CD8-positive, alpha-beta T cell (primary cell): ENCODE measurements at regions of chr2 and their contacts with region 1.

Region 1: DNA sequence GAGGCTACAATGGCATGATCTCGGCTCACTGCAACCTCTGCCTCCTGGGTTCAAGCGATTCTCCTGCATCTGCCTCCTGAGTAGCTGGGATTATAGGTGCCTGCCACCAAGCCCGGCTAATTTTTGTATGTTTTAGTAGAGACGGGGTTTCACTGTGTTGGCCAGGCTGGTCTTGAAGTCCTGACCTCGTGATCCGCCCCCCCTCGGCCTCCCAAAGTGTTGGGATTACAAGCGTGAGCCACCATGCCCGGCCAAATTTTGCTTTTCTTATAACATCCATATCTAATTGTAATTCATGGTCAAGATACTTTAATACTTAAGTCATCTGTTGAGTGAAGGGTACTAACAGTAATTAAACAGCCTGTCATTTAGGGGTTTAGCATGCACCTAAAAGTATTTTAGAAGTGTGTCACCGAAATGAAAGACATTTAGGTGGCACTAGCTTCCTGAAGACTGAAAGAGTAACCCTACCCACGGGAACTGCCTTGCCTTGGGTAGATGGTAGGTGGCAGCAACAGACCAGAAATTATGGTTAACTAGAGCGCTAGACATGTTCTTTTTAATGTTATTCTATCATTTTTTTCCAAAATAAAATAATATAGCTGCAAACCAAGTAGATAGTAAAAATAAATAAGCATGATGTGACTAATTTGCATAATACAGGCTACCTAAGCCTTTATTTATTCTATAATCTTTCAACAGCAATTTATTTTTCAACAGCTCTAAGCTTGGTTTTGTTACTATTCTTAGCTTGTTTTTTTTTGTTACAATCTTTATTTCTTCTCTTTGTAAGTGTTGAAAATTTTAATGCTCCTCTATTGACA is 8.6 kb upstream of the ACYP2 start:
- DNase-seq: peak in 5 of 9 experiments; percentile 35 to 70 (median 53)
- ATAC-seq: peak; percentile 87
- H3K4me3 ChIP-seq: no peak overlapping the region
- H3K4me3 Mint-ChIP-seq: peak overlapping the region; percentile 11
- H3K27ac ChIP-seq: no peak overlapping the region
- H3K27ac Mint-ChIP-seq: no peak overlapping the region
- H3K4me1 ChIP-seq: no peaks in the 10 kb centered on the region
- H3K4me1 Mint-ChIP-seq: peaks cover 8% of the 10 kb centered on the region
- H3K27me3 ChIP-seq: no peaks in the 10 kb centered on the region
- H3K27me3 Mint-ChIP-seq: no peaks in the 10 kb centered on the region
- CTCF ChIP-seq: peak; percentile 70

Region 2: GRCh38 chr2:53559302-53559967 is 547.4 kb before region 1 on chr2:
- CTCF ChIA-PET with region 1: no interaction called
- POLR2A ChIA-PET with region 1: no interaction called
- intact Hi-C with region 1: no loop called
- DNase-seq: no peak
- ATAC-seq: no peak
- H3K4me3 ChIP-seq: no peak overlapping the region
- H3K4me3 Mint-ChIP-seq: no peak overlapping the region
- H3K27ac ChIP-seq: no peak overlapping the region
- H3K27ac Mint-ChIP-seq: no peak overlapping the region
- H3K4me1 ChIP-seq: no peaks in the 10 kb centered on the region
- H3K4me1 Mint-ChIP-seq: no peaks in the 10 kb centered on the region
- H3K27me3 ChIP-seq: no peaks in the 10 kb centered on the region
- H3K27me3 Mint-ChIP-seq: peaks cover 2% of the 10 kb centered on the region
- CTCF ChIP-seq: no peak

Region 3: DNA sequence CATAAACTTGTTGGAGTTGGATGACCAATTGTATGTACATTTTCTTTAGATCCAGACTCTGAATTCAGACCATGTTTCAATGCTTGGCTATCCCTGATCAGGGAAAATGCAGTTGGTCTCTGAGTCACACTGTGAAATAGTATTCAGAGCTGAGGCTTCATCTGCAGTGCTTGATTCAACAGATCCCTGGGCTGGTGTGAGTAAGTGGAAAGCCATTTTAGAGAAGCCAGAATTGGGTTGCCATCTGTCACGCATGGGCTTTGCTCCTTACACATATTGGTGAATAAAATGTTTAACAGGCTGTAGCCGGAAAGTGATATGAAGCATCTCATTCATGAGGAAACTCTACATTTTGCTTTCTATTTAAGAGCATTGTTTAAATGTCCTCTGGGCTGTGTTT is 41.4 kb before region 1 on chr2:
- CTCF ChIA-PET with region 1: no interaction called
- POLR2A ChIA-PET with region 1: no interaction called
- intact Hi-C with region 1: no loop called
- DNase-seq: no peak
- ATAC-seq: no peak
- H3K4me3 ChIP-seq: no peak overlapping the region
- H3K4me3 Mint-ChIP-seq: no peak overlapping the region
- H3K27ac ChIP-seq: no peak overlapping the region
- H3K27ac Mint-ChIP-seq: no peak overlapping the region
- H3K4me1 ChIP-seq: no peaks in the 10 kb centered on the region
- H3K4me1 Mint-ChIP-seq: no peaks in the 10 kb centered on the region
- H3K27me3 ChIP-seq: no peaks in the 10 kb centered on the region
- H3K27me3 Mint-ChIP-seq: no peaks in the 10 kb centered on the region
- CTCF ChIP-seq: no peak

Region 4: GRCh38 chr2:54122939-54123338 is 16.1 kb after region 1 on chr2:
- CTCF ChIA-PET with region 1: interaction called, 9 read pairs
- POLR2A ChIA-PET with region 1: no interaction called
- intact Hi-C with region 1: loop called in 1 of 2 experiments (anchors 1 kb)
- DNase-seq: no peak
- ATAC-seq: no peak
- H3K4me3 ChIP-seq: no peak overlapping the region
- H3K4me3 Mint-ChIP-seq: no peak overlapping the region
- H3K27ac ChIP-seq: no peak overlapping the region
- H3K27ac Mint-ChIP-seq: no peak overlapping the region
- H3K4me1 ChIP-seq: no peaks in the 10 kb centered on the region
- H3K4me1 Mint-ChIP-seq: no peaks in the 10 kb centered on the region
- H3K27me3 ChIP-seq: no peaks in the 10 kb centered on the region
- H3K27me3 Mint-ChIP-seq: no peaks in the 10 kb centered on the region
- CTCF ChIP-seq: no peak

Region 5: GRCh38 chr2:54503192-54503591 is 396.3 kb after region 1 on chr2:
- CTCF ChIA-PET with region 1: interaction called, 24 read pairs
- POLR2A ChIA-PET with region 1: no interaction called
- intact Hi-C with region 1: loop called (anchors 1 kb)
- DNase-seq: peak in 5 of 9 experiments; percentile 34 to 55 (median 40)
- ATAC-seq: no peak
- H3K4me3 ChIP-seq: no peak overlapping the region
- H3K4me3 Mint-ChIP-seq: no peak overlapping the region
- H3K27ac ChIP-seq: no peak overlapping the region
- H3K27ac Mint-ChIP-seq: no peak overlapping the region
- H3K4me1 ChIP-seq: no peaks in the 10 kb centered on the region
- H3K4me1 Mint-ChIP-seq: no peaks in the 10 kb centered on the region
- H3K27me3 ChIP-seq: no peaks in the 10 kb centered on the region
- H3K27me3 Mint-ChIP-seq: peaks cover 2% of the 10 kb centered on the region
- CTCF ChIP-seq: peak; percentile 22

Region 6: DNA sequence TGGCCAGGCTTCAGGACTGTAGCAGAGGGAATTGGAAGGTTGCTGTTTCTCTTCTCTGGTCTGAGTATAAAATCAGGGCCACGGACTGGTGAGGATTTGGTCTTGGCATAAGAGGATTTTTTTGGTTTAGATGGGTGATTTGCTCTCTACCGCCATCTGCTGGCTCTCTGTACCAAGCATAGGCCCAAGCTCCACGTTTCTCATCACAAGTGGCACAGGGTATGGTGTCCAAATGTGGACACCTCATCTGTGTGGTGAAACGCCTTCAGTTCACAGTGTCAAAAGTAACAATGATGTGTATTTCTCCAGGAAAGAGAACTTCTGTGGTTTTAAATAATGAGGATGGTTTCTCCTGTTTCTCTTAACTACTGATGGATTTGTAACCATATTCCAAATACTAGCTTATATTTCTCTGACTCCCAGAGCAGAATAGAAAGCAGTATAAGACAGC is 731.8 kb after region 1 on chr2:
- CTCF ChIA-PET with region 1: interaction called, 19 read pairs
- POLR2A ChIA-PET with region 1: no interaction called
- intact Hi-C with region 1: loop called in 1 of 2 experiments (anchors 1 kb)
- DNase-seq: peak; percentile 28 to 75 (median 68)
- ATAC-seq: peak; percentile 80
- H3K4me3 ChIP-seq: no peak overlapping the region
- H3K4me3 Mint-ChIP-seq: no peak overlapping the region
- H3K27ac ChIP-seq: no peak overlapping the region
- H3K27ac Mint-ChIP-seq: no peak overlapping the region
- H3K4me1 ChIP-seq: no peaks in the 10 kb centered on the region
- H3K4me1 Mint-ChIP-seq: no peaks in the 10 kb centered on the region
- H3K27me3 ChIP-seq: no peaks in the 10 kb centered on the region
- H3K27me3 Mint-ChIP-seq: no peaks in the 10 kb centered on the region
- CTCF ChIP-seq: peak; percentile 95

Region 7: GRCh38 chr2:55431982-55432627 is 1325.3 kb after region 1 on chr2:
- CTCF ChIA-PET with region 1: no interaction called
- POLR2A ChIA-PET with region 1: no interaction called
- intact Hi-C with region 1: loop called in 1 of 2 experiments (anchors 10 kb)
- DNase-seq: peak in 2 of 9 experiments; percentile 35 to 59
- ATAC-seq: peak; percentile 42
- H3K4me3 ChIP-seq: no peak overlapping the region
- H3K4me3 Mint-ChIP-seq: no peak overlapping the region
- H3K27ac ChIP-seq: no peak overlapping the region
- H3K27ac Mint-ChIP-seq: no peak overlapping the region
- H3K4me1 ChIP-seq: no peaks in the 10 kb centered on the region
- H3K4me1 Mint-ChIP-seq: no peaks in the 10 kb centered on the region
- H3K27me3 ChIP-seq: no peaks in the 10 kb centered on the region
- H3K27me3 Mint-ChIP-seq: no peaks in the 10 kb centered on the region
- CTCF ChIP-seq: peak; percentile 49